ENCODE measurements at regions of chr7 and their contacts with region 1.

Region 1: GRCh38 chr7:26337232-26337865 is 45.7 kb downstream of the SNX10 start:
- DNase-seq: peak; percentile 55
- ATAC-seq: peak; percentile 62
- H3K4me3 ChIP-seq: peak overlapping the region in 1 of 5 experiments; percentile 57
- H3K4me3 Mint-ChIP-seq: peak overlapping the region; percentile 78
- H3K27ac ChIP-seq: peak overlapping the region; percentile 36 to 68
- H3K27ac Mint-ChIP-seq: peak overlapping the region; percentile 91
- H3K4me1 ChIP-seq: peaks cover 70 to 80% of the 10 kb centered on the region in 2 donors
- H3K4me1 Mint-ChIP-seq: peaks cover 66% of the 10 kb centered on the region
- H3K27me3 ChIP-seq: no peaks in the 10 kb centered on the region
- H3K27me3 Mint-ChIP-seq: no peaks in the 10 kb centered on the region
- CTCF ChIP-seq: no peak

Region 2: GRCh38 chr7:26398756-26399501 is 61.6 kb after region 1 on chr7:
- CTCF ChIA-PET with region 1: no interaction called
- POLR2A ChIA-PET with region 1: no interaction called
- intact Hi-C with region 1: loop called (anchors 2 kb)
- DNase-seq: peak; percentile 95
- ATAC-seq: peak; percentile 86
- H3K4me3 ChIP-seq: peak overlapping the region in 4 of 5 experiments; percentile 50 to 70 (median 64)
- H3K4me3 Mint-ChIP-seq: peak overlapping the region; percentile 99
- H3K27ac ChIP-seq: peak overlapping the region; percentile 79 to 81
- H3K27ac Mint-ChIP-seq: peak overlapping the region; percentile 100
- H3K4me1 ChIP-seq: peaks cover 20 to 28% of the 10 kb centered on the region in 2 donors
- H3K4me1 Mint-ChIP-seq: peaks cover 32% of the 10 kb centered on the region
- H3K27me3 ChIP-seq: peaks cover 0 to 8% (median 0%) of the 10 kb centered on the region in 4 experiments
- H3K27me3 Mint-ChIP-seq: peaks cover 3% of the 10 kb centered on the region
- CTCF ChIP-seq: no peak